Heart left ventricle (tissue), 16 donors: ENCODE measurements at regions of chr2 and their contacts with region 1.

Region 1: DNA sequence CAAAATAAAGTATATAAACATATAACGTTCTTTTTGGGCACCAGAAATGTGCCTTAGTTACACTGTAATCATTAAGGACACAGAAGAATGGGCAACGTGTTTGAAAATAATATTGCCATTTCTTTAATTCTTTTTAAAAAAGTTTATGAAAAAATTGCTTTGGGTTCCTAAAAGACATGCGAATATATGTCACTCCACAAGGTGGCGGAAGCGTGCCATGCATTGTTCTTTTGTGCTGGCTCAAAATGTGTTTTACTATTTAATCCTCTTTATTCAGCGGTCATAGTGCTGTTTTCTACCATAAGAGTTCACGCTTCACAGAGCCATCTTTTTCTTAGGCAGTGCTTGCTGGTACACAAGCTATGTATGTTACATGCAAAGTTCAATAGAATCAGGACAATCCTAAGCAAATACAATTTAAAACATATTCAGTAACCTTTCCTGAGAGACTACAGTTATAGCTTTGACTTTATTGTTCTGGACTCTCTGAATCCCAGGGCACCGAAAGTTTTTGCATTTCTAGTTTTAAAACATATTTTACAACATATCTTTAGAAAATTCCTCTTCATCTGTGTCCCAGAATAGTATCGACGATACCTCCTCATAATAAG is 147.8 kb upstream of the ERBB4 start:
- DNase-seq: peak in 4 of 5 donors; percentile 12 to 38 (median 30)
- ATAC-seq: no peak
- H3K4me3 ChIP-seq: no peak overlapping the region
- H3K27ac ChIP-seq: no peak overlapping the region
- H3K4me1 ChIP-seq: no peaks in the 10 kb centered on the region
- H3K27me3 ChIP-seq: no peaks in the 10 kb centered on the region
- CTCF ChIP-seq: peak; percentile 72 to 93 (median 84)
- POLR2A ChIP-seq: no peak

Region 2: DNA sequence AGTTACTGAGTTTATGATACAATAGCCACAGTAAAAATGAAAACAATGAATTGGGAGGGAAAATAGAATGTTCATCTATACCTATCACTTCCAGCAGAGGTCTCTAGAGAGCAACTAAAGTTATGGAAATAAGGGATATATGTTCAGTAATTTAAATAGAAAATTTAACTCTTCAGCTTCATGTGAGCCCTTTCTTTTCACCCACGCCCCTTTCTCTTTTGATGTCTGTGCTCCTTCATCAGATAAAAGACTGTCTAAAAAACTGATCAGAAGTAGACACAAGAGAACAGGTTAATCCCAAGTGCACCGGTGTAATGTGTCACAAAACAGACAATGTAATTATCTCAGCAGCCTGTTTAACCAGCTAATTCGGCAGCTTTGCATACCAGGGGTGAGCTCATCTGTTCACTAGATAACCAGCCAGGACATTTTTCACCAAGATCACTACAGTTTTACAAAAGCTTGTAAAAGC is 90.7 kb after region 1 on chr2:
- intact Hi-C with region 1: loop called in 1 of 10 experiments (anchors 5 kb)
- DNase-seq: no peak
- ATAC-seq: no peak
- H3K4me3 ChIP-seq: no peak overlapping the region
- H3K27ac ChIP-seq: no peak overlapping the region
- H3K4me1 ChIP-seq: peaks cover 0 to 4% (median 0%) of the 10 kb centered on the region in 12 donors
- H3K27me3 ChIP-seq: no peaks in the 10 kb centered on the region
- CTCF ChIP-seq: peak; percentile 42 to 80 (median 68)
- POLR2A ChIP-seq: no peak

Region 3: DNA sequence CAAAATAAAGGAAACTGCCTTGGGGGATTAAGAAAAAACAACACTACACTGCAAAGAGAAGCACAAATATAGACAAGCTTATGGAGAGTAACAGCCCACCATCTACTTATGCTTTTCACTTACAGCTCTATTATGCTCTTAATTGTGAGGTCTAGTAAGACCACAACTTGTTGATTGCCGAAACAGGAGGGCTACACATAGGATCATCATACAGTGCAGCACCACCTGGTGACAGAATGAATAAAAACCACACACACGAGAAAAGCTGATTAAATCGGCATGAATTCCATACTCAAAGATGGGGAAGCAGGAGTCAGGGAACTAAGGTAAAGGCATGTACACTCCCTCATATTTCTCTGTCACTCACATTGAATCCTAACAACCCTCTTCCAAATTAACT is 205.8 kb after region 1 on chr2:
- intact Hi-C with region 1: loop called in 2 of 10 experiments (anchors 2 to 10 kb)
- DNase-seq: no peak
- ATAC-seq: peak in 1 of 4 donors; percentile 29
- H3K4me3 ChIP-seq: no peak overlapping the region
- H3K27ac ChIP-seq: no peak overlapping the region
- H3K4me1 ChIP-seq: no peaks in the 10 kb centered on the region
- H3K27me3 ChIP-seq: no peaks in the 10 kb centered on the region
- CTCF ChIP-seq: peak in 7 of 12 donors; percentile 9 to 49 (median 40)
- POLR2A ChIP-seq: no peak

Region 4: DNA sequence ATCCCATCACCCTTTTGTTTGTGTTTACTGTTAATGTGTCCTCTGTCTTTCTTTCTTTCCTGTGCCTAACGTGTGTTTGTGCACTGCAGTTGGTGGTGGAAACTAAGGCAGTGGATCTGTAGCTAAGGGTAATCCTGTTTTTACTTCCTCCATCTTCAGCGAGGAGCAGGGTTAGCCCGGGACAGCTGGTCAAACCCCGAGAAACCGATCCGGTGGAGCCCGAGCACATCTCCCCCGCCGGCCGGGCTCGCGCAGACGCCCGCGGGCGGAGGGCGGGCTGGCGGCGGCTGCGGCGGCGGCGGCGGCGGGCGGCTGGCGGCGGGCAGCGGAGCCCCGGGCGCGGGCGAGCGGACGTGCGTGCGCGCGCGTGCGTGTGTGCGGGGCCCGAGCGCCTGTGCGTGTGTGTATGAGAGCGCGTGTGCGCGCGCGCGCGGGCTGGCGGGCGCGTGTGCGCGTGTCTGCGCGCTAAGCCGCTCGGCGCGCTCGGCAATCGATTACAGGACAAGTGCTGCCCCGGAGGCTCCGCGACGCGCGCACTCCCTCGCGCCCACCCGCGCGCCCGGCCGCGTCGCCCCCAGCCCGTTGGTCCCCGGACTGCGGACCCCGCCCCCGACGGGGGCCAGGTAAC is 465.2 kb after region 1 on chr2 and contains the start of gene IKZF2:
- intact Hi-C with region 1: loop called (anchors 1 to 10 kb)
- DNase-seq: peak; percentile 84 to 93 (median 86)
- ATAC-seq: peak; percentile 79 to 96 (median 92)
- H3K4me3 ChIP-seq: peak within 1 kb of the TSS; percentile 72 to 95 (median 83)
- H3K27ac ChIP-seq: peak within 1 kb of the TSS; percentile 60 to 96 (median 94)
- H3K4me1 ChIP-seq: peaks cover 0 to 31% (median 7%) of the 10 kb centered on the region in 12 donors
- H3K27me3 ChIP-seq: no peaks in the 10 kb centered on the region
- CTCF ChIP-seq: no peak
- POLR2A ChIP-seq: peak in 1 of 2 donors; percentile 1
- total RNA-seq, gene IKZF2: 4.9 to 8.0 (median 6.2) TPM

Region 5: GRCh38 chr2:213157242-213157641 is 470.9 kb after region 1 on chr2:
- intact Hi-C with region 1: loop called (anchors 1 to 10 kb)
- DNase-seq: no peak
- ATAC-seq: peak in 2 of 4 donors; percentile 56 to 75
- H3K4me3 ChIP-seq: no peak overlapping the region
- H3K27ac ChIP-seq: no peak overlapping the region
- H3K4me1 ChIP-seq: peaks cover 0 to 13% (median 2%) of the 10 kb centered on the region in 12 donors
- H3K27me3 ChIP-seq: no peaks in the 10 kb centered on the region
- CTCF ChIP-seq: no peak
- POLR2A ChIP-seq: no peak

Region 6: GRCh38 chr2:213238753-213239495 is 552.5 kb after region 1 on chr2:
- intact Hi-C with region 1: loop called in 2 of 10 experiments (anchors 5 to 10 kb)
- DNase-seq: peak in 1 of 5 donors; percentile 20
- ATAC-seq: peak in 2 of 4 donors; percentile 24 to 42
- H3K4me3 ChIP-seq: no peak overlapping the region
- H3K27ac ChIP-seq: no peak overlapping the region
- H3K4me1 ChIP-seq: peaks cover 0 to 6% (median 0%) of the 10 kb centered on the region in 12 donors
- H3K27me3 ChIP-seq: peaks cover 0 to 4% (median 0%) of the 10 kb centered on the region in 9 donors
- CTCF ChIP-seq: no peak
- POLR2A ChIP-seq: no peak

Region 7: DNA sequence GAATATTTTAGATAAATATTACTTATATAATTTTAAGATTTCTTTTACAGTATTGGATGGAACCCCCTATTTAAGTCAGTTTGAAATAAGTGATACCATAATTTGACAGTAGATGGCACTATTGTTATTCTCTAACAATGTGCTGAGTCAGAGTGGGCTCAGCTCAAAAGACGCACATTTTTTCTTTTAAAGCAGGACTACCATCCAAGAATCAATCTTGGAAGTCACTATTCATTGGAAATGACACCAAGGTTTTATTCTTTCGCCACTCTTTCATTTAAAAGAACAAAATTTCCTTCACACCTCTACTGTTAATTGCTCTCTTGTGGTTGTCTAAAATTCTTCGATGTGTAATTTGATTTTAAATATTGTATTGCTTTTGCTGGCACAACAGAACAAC is 565.2 kb after region 1 on chr2:
- intact Hi-C with region 1: loop called in 1 of 10 experiments (anchors 10 kb)
- DNase-seq: no peak
- ATAC-seq: peak in 3 of 4 donors; percentile 50 to 77 (median 59)
- H3K4me3 ChIP-seq: no peak overlapping the region
- H3K27ac ChIP-seq: no peak overlapping the region
- H3K4me1 ChIP-seq: no peaks in the 10 kb centered on the region
- H3K27me3 ChIP-seq: no peaks in the 10 kb centered on the region
- CTCF ChIP-seq: peak; percentile 57 to 81 (median 69)
- POLR2A ChIP-seq: no peak